ENCODE measurements at regions of chr21 and their contacts with region 1.

Region 1: GRCh38 chr21:32770871-32771523 is 558 bp downstream of the PAXBP1 start:
- DNase-seq: no peak
- H3K4me3 ChIP-seq: peak overlapping the region; percentile 70
- H3K27me3 ChIP-seq: no peaks in the 10 kb centered on the region
- CTCF ChIP-seq: no peak

Region 2: DNA sequence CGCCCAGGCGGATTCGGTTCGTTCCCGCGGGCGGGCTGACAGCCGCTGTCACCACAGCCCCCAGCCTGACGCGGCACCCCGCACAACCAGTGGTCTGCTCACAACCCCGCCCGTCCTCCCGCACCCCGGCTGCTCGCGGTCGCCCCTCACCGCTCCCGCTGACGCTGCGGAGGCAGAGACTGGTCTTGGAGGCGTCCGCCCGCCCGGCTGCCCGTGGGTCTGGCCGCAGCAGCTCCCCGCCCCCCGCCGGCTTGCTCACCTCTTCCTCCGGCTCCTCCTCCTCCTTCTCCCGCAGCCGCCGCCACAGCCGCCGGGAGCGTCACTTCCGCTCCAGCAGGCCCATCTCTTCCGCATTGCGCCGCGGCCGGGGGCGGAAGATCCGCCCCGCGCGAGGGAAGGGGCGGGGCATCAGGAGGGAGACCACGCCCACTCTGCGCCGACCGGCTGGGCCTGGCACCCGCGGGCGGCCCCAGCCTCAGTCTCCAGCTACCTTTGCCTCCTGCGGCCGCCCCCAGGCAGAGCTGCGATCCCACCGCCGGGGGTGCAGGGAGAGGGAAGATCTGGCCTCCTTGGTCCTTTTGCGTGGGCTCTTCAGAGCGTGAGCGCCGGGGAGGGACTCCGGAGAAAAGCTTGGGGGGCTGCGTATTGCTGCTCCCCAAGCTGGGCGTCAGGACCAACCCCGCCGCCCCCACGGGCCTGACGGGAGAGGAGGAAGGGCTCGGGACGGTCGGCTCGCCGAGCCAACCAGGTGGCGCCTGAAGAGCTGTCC is 43.1 kb before region 1 on chr21 and contains the start of gene SYNJ1:
- CTCF ChIA-PET with region 1: interaction called, 12 read pairs
- POLR2A ChIA-PET with region 1: no interaction called
- DNase-seq: peak; percentile 59
- H3K4me3 ChIP-seq: peak within 1 kb of the TSS; percentile 96
- H3K27me3 ChIP-seq: no peaks in the 10 kb centered on the region
- CTCF ChIP-seq: no peak
- polyA plus RNA-seq, gene SYNJ1: 4.2 and 5.0 TPM in 2 replicates

Region 3: DNA sequence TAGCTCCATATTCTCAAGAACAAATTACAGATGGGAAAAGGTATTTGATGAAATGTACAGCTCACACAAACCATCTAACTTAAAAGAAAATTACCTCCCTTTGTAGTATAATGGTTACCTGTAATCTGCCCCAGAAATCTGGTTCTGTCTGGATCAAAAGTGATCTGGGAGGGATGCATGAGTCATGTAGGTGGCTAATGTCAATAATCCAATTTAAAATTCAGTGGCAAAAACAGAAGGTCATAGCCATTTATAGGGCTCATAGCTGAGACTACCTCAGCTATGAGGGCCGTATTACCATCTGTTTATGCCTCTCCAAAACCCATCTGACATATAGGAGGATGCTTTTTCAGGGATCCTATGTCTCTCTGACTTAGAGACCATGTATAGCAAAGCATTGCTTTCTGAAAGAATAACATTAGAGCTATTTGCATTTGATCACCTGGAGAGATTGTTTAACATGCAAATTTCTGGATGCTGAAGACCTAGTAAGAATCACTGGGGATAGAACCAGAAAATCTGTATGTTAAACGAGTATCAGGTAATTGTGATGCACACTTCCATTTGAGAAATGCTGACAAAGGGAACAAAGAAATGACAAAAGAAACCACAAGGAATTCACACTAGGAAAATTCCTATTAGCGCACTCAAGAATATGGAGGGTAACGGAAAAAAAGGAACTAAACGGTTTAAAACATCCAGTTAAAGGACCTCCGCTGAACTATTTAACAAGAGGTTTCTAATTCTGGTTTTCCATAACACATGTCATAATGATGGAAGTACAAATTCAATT is 17.0 kb before region 1 on chr21:
- CTCF ChIA-PET with region 1: interaction called, 12 read pairs
- POLR2A ChIA-PET with region 1: no interaction called
- DNase-seq: no peak
- H3K4me3 ChIP-seq: no peak overlapping the region
- H3K27me3 ChIP-seq: no peaks in the 10 kb centered on the region
- CTCF ChIP-seq: no peak